Activated CD4-positive, alpha-beta T cell treated with anti-CD3 and anti-CD28 coated beads for 36 hours (primary cell): ENCODE measurements at regions of chr9 and their contacts with region 1.

Region 1: DNA sequence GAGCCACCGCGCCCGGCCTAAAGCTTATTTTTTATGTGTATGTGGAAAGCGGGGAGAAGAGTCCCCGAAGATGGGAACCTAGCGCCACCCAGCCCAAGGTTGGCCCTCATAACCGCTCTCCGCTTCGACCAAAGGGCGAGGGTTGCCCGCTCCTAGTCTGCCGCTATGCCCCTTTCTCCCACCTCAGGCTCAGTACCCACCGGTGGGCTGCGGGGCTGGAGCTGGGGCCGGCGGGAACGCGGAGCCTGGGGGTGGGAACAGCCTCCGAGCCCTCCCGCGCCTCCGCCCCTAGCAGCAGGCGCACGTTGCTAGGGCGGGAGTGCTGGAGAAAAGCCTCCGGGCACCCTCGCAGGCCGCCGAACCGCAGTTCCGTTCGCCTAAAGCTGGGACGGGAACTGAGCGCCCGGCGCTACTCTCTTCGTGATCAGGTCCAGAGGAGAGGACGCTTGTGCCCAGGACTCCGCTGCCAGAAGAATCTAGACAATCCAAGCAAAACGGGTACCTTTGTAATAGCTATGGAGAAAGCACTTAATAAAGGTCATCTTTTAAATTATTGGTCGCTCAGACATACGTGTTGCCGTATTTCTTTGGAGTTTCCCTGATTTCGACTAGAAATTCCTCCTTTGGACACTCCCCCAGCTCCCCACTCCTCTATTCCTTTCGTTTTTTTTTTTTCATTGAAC is at the start of gene WDR31:
- DNase-seq: peak; percentile 88
- ATAC-seq: peak; percentile 96
- H3K4me3 Mint-ChIP-seq: peak within 1 kb of the TSS; percentile 71
- H3K27ac Mint-ChIP-seq: peak within 1 kb of the TSS; percentile 43
- H3K4me1 Mint-ChIP-seq: peaks cover 27% of the 10 kb centered on the region
- H3K27me3 Mint-ChIP-seq: no peaks in the 10 kb centered on the region
- total RNA-seq, gene WDR31: 1.7 to 2.1 TPM

Region 2: DNA sequence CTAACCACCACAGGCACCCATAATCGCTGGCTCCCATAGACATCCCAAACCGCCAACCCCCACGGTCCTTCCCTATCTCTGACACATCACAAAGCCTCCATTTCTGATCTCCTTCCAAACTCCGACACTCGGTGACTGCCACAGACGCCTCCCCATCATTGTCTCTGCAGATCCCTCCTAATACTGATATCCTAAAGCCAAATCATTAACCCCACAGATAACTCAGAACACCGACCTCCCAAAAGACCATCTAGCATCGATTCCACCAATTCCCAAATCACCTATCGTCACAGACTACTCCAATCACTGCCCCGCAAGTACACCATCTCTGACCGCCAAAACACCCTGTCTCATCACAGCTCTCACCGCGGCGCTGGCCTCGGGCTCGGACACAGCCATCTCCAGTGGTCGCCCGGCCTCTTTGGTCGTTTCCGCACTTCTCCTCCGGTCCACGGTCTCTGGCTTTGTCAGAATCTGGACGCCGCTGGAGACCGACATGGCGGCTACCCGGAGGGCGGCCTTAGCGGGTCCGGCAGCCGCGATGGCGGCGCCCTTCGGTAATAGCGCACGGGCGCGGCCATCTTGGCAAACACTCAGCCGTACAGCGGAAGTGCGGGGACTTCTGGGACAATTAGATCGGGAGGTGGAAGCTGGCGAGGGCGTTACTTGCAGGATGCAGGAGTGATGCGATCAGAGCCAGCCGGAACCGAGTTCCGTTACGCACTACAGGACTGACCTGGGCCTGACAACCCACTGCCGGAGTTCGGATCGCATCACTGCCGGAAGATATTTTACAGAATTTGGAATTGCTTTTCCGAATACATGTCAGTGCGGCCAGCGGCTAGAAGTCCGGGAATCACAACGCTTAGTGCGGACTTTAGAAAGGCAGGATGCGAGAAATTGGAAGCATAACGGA is 283.7 kb before region 1 on chr9 and contains the start of gene ZFP37:
- CTCF ChIA-PET with region 1: no interaction called
- POLR2A ChIA-PET with region 1: no interaction called
- intact Hi-C with region 1: loop called in 1 of 2 experiments (anchors 10 kb)
- DNase-seq: peak; percentile 83
- ATAC-seq: peak; percentile 97
- H3K4me3 Mint-ChIP-seq: no peak within 1 kb of the TSS
- H3K27ac Mint-ChIP-seq: no peak within 1 kb of the TSS
- H3K4me1 Mint-ChIP-seq: no peaks in the 10 kb centered on the region
- H3K27me3 Mint-ChIP-seq: peaks cover 11% of the 10 kb centered on the region
- total RNA-seq, gene ZFP37: 1.0 to 1.5 TPM

Region 3: GRCh38 chr9:113160571-113160970 is 179.6 kb before region 1 on chr9:
- CTCF ChIA-PET with region 1: no interaction called
- POLR2A ChIA-PET with region 1: no interaction called
- intact Hi-C with region 1: no loop called
- DNase-seq: no peak
- ATAC-seq: no peak
- H3K4me3 Mint-ChIP-seq: no peak overlapping the region
- H3K27ac Mint-ChIP-seq: peak overlapping the region; percentile 15
- H3K4me1 Mint-ChIP-seq: peaks cover 13% of the 10 kb centered on the region
- H3K27me3 Mint-ChIP-seq: no peaks in the 10 kb centered on the region

Region 4: GRCh38 chr9:113376634-113377567 is 36.7 kb after region 1 on chr9 and contains the start of gene HDHD3:
- CTCF ChIA-PET with region 1: no interaction called
- POLR2A ChIA-PET with region 1: interaction called, 3 read pairs
- intact Hi-C with region 1: loop called (anchors 1 to 5 kb)
- DNase-seq: peak; percentile 90
- ATAC-seq: peak; percentile 89
- H3K4me3 Mint-ChIP-seq: peak within 1 kb of the TSS; percentile 88
- H3K27ac Mint-ChIP-seq: peak within 1 kb of the TSS; percentile 89
- H3K4me1 Mint-ChIP-seq: peaks cover 17% of the 10 kb centered on the region
- H3K27me3 Mint-ChIP-seq: no peaks in the 10 kb centered on the region
- total RNA-seq, gene HDHD3: 12.7 to 16.5 TPM